PC-9 (cell line): ENCODE measurements at regions of chr16 and their contacts with region 1.

Region 1: DNA sequence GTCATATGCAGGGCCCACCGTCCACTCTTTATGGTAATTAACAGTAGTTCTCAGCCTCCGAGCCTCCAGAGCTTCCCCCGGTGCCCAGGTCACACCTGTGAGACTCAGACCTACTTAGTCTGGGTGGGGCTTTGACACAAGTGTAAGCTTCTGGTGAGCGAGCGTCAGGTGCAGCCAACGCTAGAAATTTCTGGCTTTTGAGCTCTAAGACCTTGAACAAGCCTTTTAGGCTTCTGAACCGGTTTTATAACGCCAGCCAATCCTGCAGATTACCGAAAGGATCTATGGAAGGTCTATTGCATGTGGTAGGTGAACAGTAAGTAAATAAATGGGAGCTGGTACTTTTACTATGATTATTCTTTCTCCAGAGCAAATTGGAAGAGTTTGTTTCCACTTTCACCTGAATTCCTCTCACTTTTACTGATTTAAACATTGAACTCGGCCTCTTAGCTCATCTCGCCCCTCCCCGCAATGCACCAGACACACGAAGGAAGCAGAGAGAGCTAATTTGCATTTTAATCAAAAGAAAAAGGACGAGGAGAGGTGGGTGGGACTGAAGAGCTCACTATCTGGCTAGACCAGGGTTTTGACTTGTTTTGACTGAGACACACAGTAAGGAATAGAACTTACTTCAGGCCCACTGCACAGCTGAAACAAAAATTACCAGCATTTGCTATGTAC is 47.1 kb downstream of the ABAT start:
- DNase-seq: no peak
- H3K4me3 ChIP-seq: no peak overlapping the region
- H3K27ac ChIP-seq: no peak overlapping the region
- H3K4me1 ChIP-seq: no peaks in the 10 kb centered on the region
- H3K27me3 ChIP-seq: no peaks in the 10 kb centered on the region
- CTCF ChIP-seq: no peak

Region 2: GRCh38 chr16:8685994-8686621 is 35.4 kb before region 1 on chr16:
- CTCF ChIA-PET with region 1: no interaction called
- POLR2A ChIA-PET with region 1: no interaction called
- intact Hi-C with region 1: loop called (anchors 2 kb)
- DNase-seq: peak in 1 of 2 experiments; percentile 49
- H3K4me3 ChIP-seq: no peak overlapping the region
- H3K27ac ChIP-seq: no peak overlapping the region
- H3K4me1 ChIP-seq: peaks cover 5% of the 10 kb centered on the region
- H3K27me3 ChIP-seq: no peaks in the 10 kb centered on the region
- CTCF ChIP-seq: no peak